Posterior vena cava (tissue), 2 donors: ENCODE measurements at regions of chr3 and their contacts with region 1.

Region 1: GRCh38 chr3:66047311-66048050 is 8.8 kb upstream of the MAGI1 start:
- DNase-seq: peak; percentile 85

Region 2: GRCh38 chr3:65361448-65361847 is 686.0 kb before region 1 on chr3:
- intact Hi-C with region 1: no loop called
- DNase-seq: no peak

Region 3: DNA sequence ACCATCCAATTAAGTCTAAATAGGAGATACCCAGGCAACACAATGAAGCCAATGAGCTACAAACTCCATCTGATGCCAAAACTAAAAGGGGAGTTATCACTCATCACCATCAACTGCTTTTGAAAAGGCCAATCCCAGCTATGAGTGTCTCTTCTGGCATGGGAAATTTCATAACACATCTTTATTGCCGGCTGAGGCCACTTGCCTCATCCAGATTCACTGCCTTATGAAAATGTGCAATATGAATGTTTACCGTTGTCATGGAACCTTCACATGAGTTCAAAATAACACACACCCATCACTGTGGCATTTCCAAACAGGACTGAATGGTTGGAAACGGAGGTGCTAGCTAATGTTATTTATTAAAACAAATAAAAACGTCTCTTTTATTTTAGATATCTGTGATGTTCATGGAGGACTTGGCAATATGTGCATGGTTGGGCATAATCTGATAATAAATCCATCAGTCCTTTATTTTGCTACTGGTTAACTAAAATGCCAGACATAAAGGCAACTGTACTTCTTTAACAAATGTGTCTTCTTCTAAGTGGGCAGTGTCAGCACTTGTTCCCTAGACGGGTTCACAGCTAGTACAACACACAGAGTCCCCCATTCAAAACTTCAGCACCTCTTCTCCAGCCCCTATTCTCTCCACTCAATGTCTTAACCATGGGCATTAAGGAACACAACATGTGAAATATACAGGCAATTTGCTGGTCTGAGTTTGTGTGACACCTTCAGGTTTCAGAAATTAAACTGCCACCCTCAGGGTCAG is 152.6 kb before region 1 on chr3:
- intact Hi-C with region 1: loop called in 1 of 2 experiments (anchors 10 kb)
- DNase-seq: no peak

Region 4: GRCh38 chr3:65905771-65906170 is 141.7 kb before region 1 on chr3:
- intact Hi-C with region 1: no loop called
- DNase-seq: no peak